Esophagus squamous epithelium (tissue), 5 donors: ENCODE measurements at regions of chr9 and their contacts with region 1.

Region 1: GRCh38 chr9:91419222-91420191 is 4.1 kb downstream of the NFIL3 start:
- DNase-seq: no peak
- H3K4me3 ChIP-seq: peak overlapping the region in 2 of 4 donors; percentile 7 to 45
- H3K27ac ChIP-seq: peak overlapping the region in 3 of 4 donors; percentile 40 to 83 (median 58)
- H3K4me1 ChIP-seq: peaks cover 6 to 75% (median 14%) of the 10 kb centered on the region in 3 donors
- H3K27me3 ChIP-seq: peaks cover 0 to 7% (median 0%) of the 10 kb centered on the region in 4 donors
- CTCF ChIP-seq: no peak
- POLR2A ChIP-seq: peak in 1 of 4 donors; percentile 43

Region 2: GRCh38 chr9:91273853-91274552 is 145.5 kb before region 1 on chr9:
- intact Hi-C with region 1: no loop called
- DNase-seq: no peak
- H3K4me3 ChIP-seq: no peak overlapping the region
- H3K27ac ChIP-seq: no peak overlapping the region
- H3K4me1 ChIP-seq: no peaks in the 10 kb centered on the region
- H3K27me3 ChIP-seq: no peaks in the 10 kb centered on the region
- CTCF ChIP-seq: no peak
- POLR2A ChIP-seq: no peak

Region 3: GRCh38 chr9:91312717-91313344 is 106.7 kb before region 1 on chr9:
- intact Hi-C with region 1: loop called (anchors 10 kb)
- DNase-seq: no peak
- H3K4me3 ChIP-seq: no peak overlapping the region
- H3K27ac ChIP-seq: peak overlapping the region in 3 of 4 donors; percentile 50 to 74 (median 56)
- H3K4me1 ChIP-seq: peaks cover 0 to 20% (median 4%) of the 10 kb centered on the region in 3 donors
- H3K27me3 ChIP-seq: no peaks in the 10 kb centered on the region
- CTCF ChIP-seq: no peak
- POLR2A ChIP-seq: no peak